ENCODE measurements at regions of chr3 and their contacts with region 1.

Region 1: DNA sequence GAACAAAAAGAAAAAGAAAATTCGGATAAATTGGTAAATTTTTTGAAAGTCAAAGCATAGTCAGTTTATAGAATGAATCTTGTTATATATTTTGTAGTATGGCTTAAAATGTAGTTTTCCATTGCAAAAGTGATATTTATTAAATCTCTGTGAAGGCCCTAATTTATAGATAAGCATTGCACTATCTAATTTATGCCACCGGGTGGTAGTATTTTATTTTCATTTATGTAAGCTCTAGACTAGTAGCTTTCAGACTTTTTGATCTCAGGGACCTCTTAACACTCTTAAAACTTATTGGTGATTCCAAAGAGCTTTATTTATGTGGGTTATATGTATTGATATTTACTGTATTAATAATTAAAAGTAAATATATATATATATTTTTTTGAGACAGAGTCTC is 133.9 kb upstream of the LRRFIP2 start:
- DNase-seq: no peak
- H3K4me3 Mint-ChIP-seq: no peak overlapping the region
- H3K27ac Mint-ChIP-seq: no peak overlapping the region
- H3K4me1 Mint-ChIP-seq: peaks cover 16% of the 10 kb centered on the region
- H3K27me3 Mint-ChIP-seq: no peaks in the 10 kb centered on the region

Region 2: DNA sequence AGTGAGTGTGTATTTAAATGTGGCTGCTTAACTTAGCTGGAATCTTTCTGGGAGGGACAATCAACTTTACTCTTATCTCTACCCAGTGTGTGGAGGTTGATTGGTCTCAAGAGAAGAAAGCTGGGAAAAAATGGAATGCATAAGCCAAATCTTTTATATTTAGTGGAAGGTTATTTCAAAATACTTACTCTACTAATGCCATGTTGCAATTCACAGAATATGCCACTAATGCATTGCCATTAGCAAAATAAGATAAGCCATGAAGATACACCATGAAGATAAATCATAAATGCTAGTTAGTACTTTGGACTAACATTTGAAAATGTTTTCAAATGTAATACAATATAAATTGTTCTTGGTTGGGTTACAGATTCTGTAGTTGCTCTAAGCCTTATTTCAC is 21.2 kb after region 1 on chr3:
- CTCF ChIA-PET with region 1: interaction called, 11 read pairs
- POLR2A ChIA-PET with region 1: interaction called, 5 read pairs
- DNase-seq: no peak
- H3K4me3 Mint-ChIP-seq: no peak overlapping the region
- H3K27ac Mint-ChIP-seq: no peak overlapping the region
- H3K4me1 Mint-ChIP-seq: peaks cover 5% of the 10 kb centered on the region
- H3K27me3 Mint-ChIP-seq: no peaks in the 10 kb centered on the region

Region 3: GRCh38 chr3:37375184-37376127 is 67.2 kb after region 1 on chr3:
- CTCF ChIA-PET with region 1: no interaction called
- POLR2A ChIA-PET with region 1: no interaction called
- DNase-seq: no peak
- H3K4me3 Mint-ChIP-seq: no peak overlapping the region
- H3K27ac Mint-ChIP-seq: no peak overlapping the region
- H3K4me1 Mint-ChIP-seq: no peaks in the 10 kb centered on the region
- H3K27me3 Mint-ChIP-seq: no peaks in the 10 kb centered on the region

Region 4: GRCh38 chr3:37443363-37444035 is 135.3 kb after region 1 on chr3:
- CTCF ChIA-PET with region 1: no interaction called
- POLR2A ChIA-PET with region 1: no interaction called
- DNase-seq: no peak
- H3K4me3 Mint-ChIP-seq: no peak overlapping the region
- H3K27ac Mint-ChIP-seq: no peak overlapping the region
- H3K4me1 Mint-ChIP-seq: no peaks in the 10 kb centered on the region
- H3K27me3 Mint-ChIP-seq: peaks cover 23% of the 10 kb centered on the region

Measured in activated CD4-positive, alpha-beta T cell treated with anti-CD3 and anti-CD28 coated beads, Interleukin-2, amount 10 ng/mL, durations not matched to agents 7 days and 5 days (primary cell).